IMR-90 (cell line): ENCODE measurements at regions of chr14 and their contacts with region 1.

Region 1: GRCh38 chr14:50321009-50321660 is 9.0 kb downstream of the DMAC2L start:
- DNase-seq: peak; percentile 98
- ATAC-seq: peak; percentile 95
- H3K4me3 ChIP-seq: peak overlapping the region; percentile 49; the same call in 1 of the 2 replicates
- H3K27ac ChIP-seq: no peak overlapping the region
- H3K4me1 ChIP-seq: peaks cover 9% of the 10 kb centered on the region
- H3K27me3 ChIP-seq: no peaks in the 10 kb centered on the region
- CTCF ChIP-seq: peak; percentile 88
- POLR2A ChIP-seq: no peak
- RAD21 ChIP-seq: peak; percentile 81

Region 2: GRCh38 chr14:50396631-50397390 is 75.7 kb after region 1 on chr14 and contains the start of gene CDKL1:
- CTCF ChIA-PET with region 1: interaction called, 3 read pairs
- POLR2A ChIA-PET with region 1: no interaction called
- dilution Hi-C with region 1: no loop called
- in situ Hi-C with region 1: no loop called
- intact Hi-C with region 1: loop called (anchors 2 kb)
- DNase-seq: peak; percentile 70
- ATAC-seq: peak; percentile 84
- H3K4me3 ChIP-seq: peak within 1 kb of the TSS; percentile 61
- H3K27ac ChIP-seq: peak within 1 kb of the TSS; percentile 77
- H3K4me1 ChIP-seq: peaks cover 19% of the 10 kb centered on the region
- H3K27me3 ChIP-seq: no peaks in the 10 kb centered on the region
- CTCF ChIP-seq: no peak
- POLR2A ChIP-seq: no peak
- RAD21 ChIP-seq: no peak
- total RNA-seq, gene CDKL1: 3.8 and 7.2 TPM in 2 replicates

Region 3: DNA sequence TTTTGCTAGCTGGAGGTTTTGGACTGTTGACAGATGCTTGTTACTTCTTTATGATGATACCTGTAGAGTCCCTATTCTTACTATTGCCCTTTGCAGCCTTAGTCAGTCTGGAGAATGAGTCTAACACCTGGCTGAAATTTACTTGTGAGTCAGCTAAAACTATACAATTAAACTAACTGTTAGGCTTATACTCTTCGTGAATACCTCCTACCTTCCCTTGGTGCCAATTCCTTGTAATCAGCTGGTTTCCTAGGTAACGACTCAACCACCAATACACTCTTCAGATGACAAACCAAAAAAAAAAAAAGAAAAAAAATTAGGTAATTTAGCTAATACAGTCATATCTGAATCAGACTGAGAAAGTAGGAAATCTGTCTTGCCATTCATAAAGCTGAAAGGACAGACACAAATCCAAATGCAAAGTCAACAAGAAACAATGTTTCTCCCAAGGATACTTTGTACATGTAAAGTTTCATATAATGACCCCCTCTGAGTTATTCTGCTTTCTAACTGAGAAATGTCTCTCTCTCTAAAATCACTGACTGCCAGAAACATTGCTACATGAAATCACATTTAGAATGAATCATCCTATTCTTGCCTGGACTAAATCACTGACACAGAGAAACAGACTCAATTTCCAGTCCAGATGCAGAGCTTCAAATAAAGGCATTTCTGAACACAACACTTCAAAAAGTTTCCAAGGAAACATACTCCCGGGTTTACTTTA is 132.0 kb after region 1 on chr14:
- CTCF ChIA-PET with region 1: no interaction called
- POLR2A ChIA-PET with region 1: no interaction called
- dilution Hi-C with region 1: no loop called
- in situ Hi-C with region 1: no loop called
- intact Hi-C with region 1: loop called (anchors 5 kb)
- DNase-seq: peak; percentile 86
- ATAC-seq: peak; percentile 81
- H3K4me3 ChIP-seq: no peak overlapping the region
- H3K27ac ChIP-seq: no peak overlapping the region
- H3K4me1 ChIP-seq: peaks cover 5% of the 10 kb centered on the region
- H3K27me3 ChIP-seq: no peaks in the 10 kb centered on the region
- CTCF ChIP-seq: no peak
- POLR2A ChIP-seq: no peak
- RAD21 ChIP-seq: no peak

Region 4: GRCh38 chr14:50462111-50462510 is 141.0 kb after region 1 on chr14:
- CTCF ChIA-PET with region 1: no interaction called
- POLR2A ChIA-PET with region 1: interaction called, 29 read pairs
- dilution Hi-C with region 1: no loop called
- in situ Hi-C with region 1: no loop called
- intact Hi-C with region 1: no loop called
- DNase-seq: no peak
- ATAC-seq: no peak
- H3K4me3 ChIP-seq: no peak overlapping the region
- H3K27ac ChIP-seq: no peak overlapping the region
- H3K4me1 ChIP-seq: no peaks in the 10 kb centered on the region
- H3K27me3 ChIP-seq: no peaks in the 10 kb centered on the region
- CTCF ChIP-seq: no peak
- POLR2A ChIP-seq: no peak
- RAD21 ChIP-seq: no peak